ENCODE measurements at regions of chr1 and their contacts with region 1.

Region 1: DNA sequence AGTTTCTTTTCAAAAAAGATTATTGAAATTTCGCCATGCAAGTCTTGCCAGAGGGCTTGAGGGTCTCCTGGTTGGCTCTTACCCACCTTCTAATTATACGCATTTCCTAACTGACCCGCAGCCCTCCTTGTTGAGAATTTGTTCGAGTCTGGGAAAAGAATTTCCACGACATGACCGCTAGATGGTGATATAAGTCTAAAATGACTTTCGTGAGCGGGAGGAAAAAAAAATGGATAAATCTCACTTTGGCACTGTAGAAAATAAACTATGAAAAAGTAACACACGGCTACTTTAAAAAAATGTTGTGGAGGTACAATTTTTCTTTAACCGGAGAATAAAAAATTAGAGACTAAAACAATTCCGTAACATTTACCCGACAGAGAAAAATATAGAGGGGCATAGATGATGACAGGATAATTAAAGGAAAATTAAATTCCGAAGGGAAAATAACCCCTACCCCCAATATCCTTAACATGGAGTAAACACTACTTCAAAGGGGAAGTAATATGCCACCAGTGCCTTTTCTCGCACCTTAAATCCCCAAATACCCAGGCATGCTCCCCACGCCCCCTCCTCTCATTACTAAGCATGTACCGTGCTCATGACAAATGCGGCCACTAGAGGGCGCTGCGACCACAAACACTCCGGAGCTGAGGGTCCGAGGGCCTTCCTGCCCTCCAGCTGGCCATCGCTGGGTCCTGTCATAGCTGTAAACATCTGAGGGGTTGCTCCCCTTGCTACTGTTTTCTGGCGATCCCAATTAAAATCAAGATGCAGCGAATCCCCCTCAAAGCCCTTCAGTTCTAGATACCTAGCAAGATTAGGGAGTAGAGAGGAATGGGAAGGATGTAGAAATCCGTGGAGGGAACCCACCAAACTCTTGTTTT is 266.9 kb downstream of the ASTN1 start:
- DNase-seq: peak; percentile 35 to 76 (median 47)
- ATAC-seq: peak in 3 of 4 donors; percentile 31 to 73 (median 68)
- H3K4me3 ChIP-seq: peak overlapping the region in 8 of 12 donors; percentile 8 to 43 (median 30)
- H3K27ac ChIP-seq: no peak overlapping the region
- H3K4me1 ChIP-seq: peaks cover 0 to 16% (median 5%) of the 10 kb centered on the region in 12 donors
- H3K27me3 ChIP-seq: peaks cover 0 to 47% (median 0%) of the 10 kb centered on the region in 9 donors
- CTCF ChIP-seq: peak; percentile 52 to 79 (median 66)
- POLR2A ChIP-seq: no peak

Region 2: DNA sequence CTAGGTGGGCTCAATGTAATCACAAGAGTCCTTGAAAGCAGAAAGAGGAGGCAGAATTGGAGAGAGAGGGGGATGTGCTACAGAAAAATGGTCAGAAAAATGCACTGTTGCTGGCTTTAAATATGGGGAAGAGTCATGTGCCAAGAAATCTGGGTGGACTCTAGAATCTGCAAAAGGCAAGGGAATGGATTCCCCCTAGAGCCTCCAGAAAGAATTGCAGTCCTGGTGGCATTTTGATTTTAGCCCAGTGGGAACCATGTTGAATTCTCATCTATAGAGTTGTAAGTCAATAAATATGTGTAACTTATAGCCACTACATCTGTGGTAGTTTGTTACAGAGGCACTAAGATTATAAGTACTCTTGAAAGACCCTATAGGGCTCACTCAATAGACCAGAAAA is 56.6 kb after region 1 on chr1:
- intact Hi-C with region 1: loop called in 4 of 10 experiments (anchors 2 to 5 kb)
- DNase-seq: no peak
- ATAC-seq: no peak
- H3K4me3 ChIP-seq: no peak overlapping the region
- H3K27ac ChIP-seq: no peak overlapping the region
- H3K4me1 ChIP-seq: no peaks in the 10 kb centered on the region
- H3K27me3 ChIP-seq: no peaks in the 10 kb centered on the region
- CTCF ChIP-seq: peak in 3 of 12 donors; percentile 20 to 22 (median 21)
- POLR2A ChIP-seq: no peak

Region 3: GRCh38 chr1:177020851-177021589 is 123.4 kb after region 1 on chr1:
- intact Hi-C with region 1: no loop called
- DNase-seq: peak in 1 of 5 donors; percentile 49
- ATAC-seq: peak in 2 of 4 donors; percentile 68 to 75
- H3K4me3 ChIP-seq: no peak overlapping the region
- H3K27ac ChIP-seq: peak overlapping the region in 2 of 12 donors; percentile 6 to 55
- H3K4me1 ChIP-seq: peaks cover 0 to 9% (median 0%) of the 10 kb centered on the region in 12 donors
- H3K27me3 ChIP-seq: no peaks in the 10 kb centered on the region
- CTCF ChIP-seq: no peak
- POLR2A ChIP-seq: no peak

Region 4: GRCh38 chr1:177032434-177032833 is 134.8 kb after region 1 on chr1:
- intact Hi-C with region 1: no loop called
- DNase-seq: no peak
- ATAC-seq: no peak
- H3K4me3 ChIP-seq: no peak overlapping the region
- H3K27ac ChIP-seq: no peak overlapping the region
- H3K4me1 ChIP-seq: no peaks in the 10 kb centered on the region
- H3K27me3 ChIP-seq: no peaks in the 10 kb centered on the region
- CTCF ChIP-seq: no peak
- POLR2A ChIP-seq: no peak

Region 5: GRCh38 chr1:177256153-177257075 is 358.8 kb after region 1 on chr1:
- intact Hi-C with region 1: loop called in 1 of 10 experiments (anchors 10 kb)
- DNase-seq: peak; percentile 60 to 77 (median 64)
- ATAC-seq: peak; percentile 37 to 92 (median 86)
- H3K4me3 ChIP-seq: no peak overlapping the region
- H3K27ac ChIP-seq: no peak overlapping the region
- H3K4me1 ChIP-seq: peaks cover 0 to 11% (median 2%) of the 10 kb centered on the region in 12 donors
- H3K27me3 ChIP-seq: peaks cover 0 to 8% (median 0%) of the 10 kb centered on the region in 9 donors
- CTCF ChIP-seq: peak; percentile 43 to 72 (median 62)
- POLR2A ChIP-seq: no peak

Region 6: GRCh38 chr1:177780096-177780700 is 882.6 kb after region 1 on chr1:
- intact Hi-C with region 1: loop called in 9 of 10 experiments (anchors 5 to 10 kb)
- DNase-seq: no peak
- ATAC-seq: peak in 3 of 4 donors; percentile 56 to 64 (median 62)
- H3K4me3 ChIP-seq: no peak overlapping the region
- H3K27ac ChIP-seq: no peak overlapping the region
- H3K4me1 ChIP-seq: no peaks in the 10 kb centered on the region
- H3K27me3 ChIP-seq: peaks cover 0 to 14% (median 0%) of the 10 kb centered on the region in 9 donors
- CTCF ChIP-seq: peak; percentile 22 to 65 (median 44)
- POLR2A ChIP-seq: no peak

Region 7: GRCh38 chr1:177948336-177948972 is 1050.9 kb after region 1 on chr1:
- intact Hi-C with region 1: loop called in 8 of 10 experiments (anchors 2 to 5 kb)
- DNase-seq: peak in 2 of 5 donors; percentile 40 to 45
- ATAC-seq: peak; percentile 24 to 67 (median 56)
- H3K4me3 ChIP-seq: no peak overlapping the region
- H3K27ac ChIP-seq: no peak overlapping the region
- H3K4me1 ChIP-seq: peaks cover 0 to 8% (median 0%) of the 10 kb centered on the region in 12 donors
- H3K27me3 ChIP-seq: no peaks in the 10 kb centered on the region
- CTCF ChIP-seq: peak; percentile 73 to 95 (median 86)
- POLR2A ChIP-seq: no peak